ENCODE measurements at regions of chr20 and their contacts with region 1.

Region 1: GRCh38 chr20:50460460-50461267 is 49.5 kb upstream of the PTPN1 start:
- DNase-seq: peak; percentile 73
- H3K4me3 ChIP-seq: no peak overlapping the region
- H3K27ac ChIP-seq: no peak overlapping the region
- H3K4me1 ChIP-seq: peaks cover 18% of the 10 kb centered on the region
- H3K27me3 ChIP-seq: no peaks in the 10 kb centered on the region
- CTCF ChIP-seq: peak; percentile 95

Region 2: DNA sequence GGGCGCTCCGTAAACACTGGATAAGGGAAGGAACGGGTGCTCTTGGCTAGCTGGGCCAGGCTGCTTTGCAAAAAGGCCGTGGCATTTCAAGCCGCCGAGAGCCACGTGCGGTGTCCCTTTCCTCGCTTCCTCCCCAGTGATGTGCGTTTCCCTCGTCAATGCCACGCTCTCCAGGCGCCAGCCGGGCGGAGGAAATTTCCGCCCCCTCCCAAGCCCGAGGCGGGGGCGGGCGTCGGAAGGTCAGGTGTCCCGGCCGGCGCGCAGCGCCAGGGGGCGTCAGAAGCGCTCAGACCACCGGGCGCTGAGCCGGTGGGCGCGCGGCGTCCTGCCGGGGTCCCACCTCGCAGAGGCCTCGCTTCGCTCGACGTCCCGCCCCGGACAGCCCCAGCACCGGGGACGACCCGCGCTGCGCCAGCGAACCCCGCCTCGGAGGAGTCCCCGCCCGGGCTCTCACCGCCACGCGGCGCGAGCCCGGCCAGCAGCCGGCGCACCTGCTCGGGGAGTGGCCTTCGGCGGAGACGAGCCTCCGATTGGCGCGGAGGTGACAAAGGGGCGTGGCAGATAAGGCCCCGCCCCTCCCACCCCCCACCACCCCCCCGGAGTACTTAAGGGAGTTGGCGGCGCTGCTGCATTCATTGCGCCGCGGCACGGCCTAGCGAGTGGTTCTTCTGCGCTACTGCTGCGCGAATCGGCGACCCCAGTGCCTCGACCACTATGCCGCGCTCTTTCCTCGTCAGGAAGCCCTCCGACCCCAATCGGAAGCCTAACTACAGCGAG is 478.1 kb before region 1 on chr20 and contains the start of gene SNAI1:
- CTCF ChIA-PET with region 1: no interaction called
- dilution Hi-C with region 1: no loop called
- in situ Hi-C with region 1: no loop called
- intact Hi-C with region 1: loop called (anchors 10 kb)
- DNase-seq: peak; percentile 68
- H3K4me3 ChIP-seq: peak within 1 kb of the TSS in 1 of 3 experiments; percentile 32
- H3K27ac ChIP-seq: no peak within 1 kb of the TSS
- H3K4me1 ChIP-seq: peaks cover 15% of the 10 kb centered on the region
- H3K27me3 ChIP-seq: peaks cover 2% of the 10 kb centered on the region
- CTCF ChIP-seq: peak in 1 of 2 donors; percentile 26
- total RNA-seq, gene SNAI1: not detected

Region 3: GRCh38 chr20:50189681-50190582 is 270.7 kb before region 1 on chr20:
- CTCF ChIA-PET with region 1: no interaction called
- dilution Hi-C with region 1: no loop called
- in situ Hi-C with region 1: loop called in 1 of 2 experiments (anchors 5 kb)
- intact Hi-C with region 1: loop called (anchors 1 kb)
- DNase-seq: peak; percentile 69
- H3K4me3 ChIP-seq: peak overlapping the region in 2 of 3 experiments; percentile 89 to 99
- H3K27ac ChIP-seq: peak overlapping the region; percentile 68
- H3K4me1 ChIP-seq: peaks cover 18% of the 10 kb centered on the region
- H3K27me3 ChIP-seq: no peaks in the 10 kb centered on the region
- CTCF ChIP-seq: peak; percentile 25 to 70

Region 4: DNA sequence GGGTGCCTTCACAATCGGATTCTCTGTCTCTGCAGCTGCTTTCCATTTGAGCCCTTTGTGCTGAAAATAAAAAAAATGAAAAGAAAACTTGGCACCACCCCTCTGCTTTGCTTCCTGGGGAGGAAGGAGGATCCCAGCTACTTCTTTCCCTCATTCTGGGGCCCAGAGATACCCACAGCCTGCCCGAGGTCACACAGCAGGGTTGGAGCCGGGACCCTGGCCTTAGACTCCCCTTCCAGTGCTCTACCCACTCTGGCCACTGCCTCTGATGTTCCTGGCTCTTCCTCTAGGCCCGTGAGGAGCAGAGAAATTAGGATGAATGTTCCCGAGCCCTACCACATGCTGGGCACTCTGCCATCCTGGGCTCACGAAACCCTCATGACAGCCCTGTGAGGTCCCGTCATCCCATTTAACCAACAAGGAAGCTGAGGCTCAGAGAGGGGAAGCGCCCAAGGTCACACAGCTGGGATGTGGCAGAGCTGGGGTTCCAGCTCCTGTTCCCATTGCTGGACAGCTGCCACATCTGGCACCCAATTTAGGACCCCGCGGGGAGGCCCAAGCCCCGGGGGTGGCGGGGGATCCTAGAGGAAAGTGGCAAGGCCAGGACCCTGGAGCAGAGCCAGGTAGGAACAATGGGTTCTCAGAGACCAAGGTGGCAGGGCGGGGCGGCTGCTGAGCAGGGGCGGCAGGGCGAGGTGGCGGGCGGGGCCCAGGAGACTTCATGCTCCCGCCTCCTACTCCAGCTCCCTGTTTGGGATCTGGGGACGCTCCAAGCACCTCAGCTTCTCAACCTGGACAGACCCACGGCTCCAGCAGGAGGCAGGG is 193.4 kb before region 1 on chr20:
- CTCF ChIA-PET with region 1: no interaction called
- dilution Hi-C with region 1: no loop called
- in situ Hi-C with region 1: no loop called
- intact Hi-C with region 1: loop called (anchors 5 kb)
- DNase-seq: peak; percentile 81
- H3K4me3 ChIP-seq: no peak overlapping the region
- H3K27ac ChIP-seq: peak overlapping the region; percentile 67
- H3K4me1 ChIP-seq: peaks cover 21% of the 10 kb centered on the region
- H3K27me3 ChIP-seq: no peaks in the 10 kb centered on the region
- CTCF ChIP-seq: peak in 1 of 2 donors; percentile 28

Region 5: DNA sequence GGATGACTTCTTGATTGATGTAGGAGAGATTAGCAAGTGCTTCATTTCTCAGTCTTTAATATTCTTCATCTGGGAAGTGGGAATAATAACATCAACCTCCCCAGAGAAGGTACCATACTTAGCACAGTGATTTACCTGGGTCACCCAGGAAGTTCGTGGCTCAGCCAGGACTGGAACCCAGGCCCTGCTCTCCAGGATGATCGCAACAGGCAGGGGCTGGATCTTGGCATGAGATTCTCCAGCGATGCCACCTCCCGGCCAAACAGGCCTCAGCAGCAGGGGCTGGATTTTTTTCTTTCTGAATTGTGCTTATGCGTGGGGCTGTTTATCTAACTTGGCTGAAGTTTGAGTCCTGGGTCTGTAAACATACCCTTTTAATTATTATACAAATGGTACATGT is 80.0 kb before region 1 on chr20:
- CTCF ChIA-PET with region 1: no interaction called
- dilution Hi-C with region 1: no loop called
- in situ Hi-C with region 1: no loop called
- intact Hi-C with region 1: loop called (anchors 5 kb)
- DNase-seq: peak; percentile 28
- H3K4me3 ChIP-seq: no peak overlapping the region
- H3K27ac ChIP-seq: no peak overlapping the region
- H3K4me1 ChIP-seq: peaks cover 18% of the 10 kb centered on the region
- H3K27me3 ChIP-seq: no peaks in the 10 kb centered on the region
- CTCF ChIP-seq: peak; percentile 50 to 75

Region 6: GRCh38 chr20:50427740-50428462 is 32.8 kb before region 1 on chr20:
- CTCF ChIA-PET with region 1: no interaction called
- dilution Hi-C with region 1: no loop called
- in situ Hi-C with region 1: no loop called
- intact Hi-C with region 1: loop called (anchors 2 kb)
- DNase-seq: peak; percentile 72
- H3K4me3 ChIP-seq: no peak overlapping the region
- H3K27ac ChIP-seq: peak overlapping the region; percentile 39
- H3K4me1 ChIP-seq: peaks cover 60% of the 10 kb centered on the region
- H3K27me3 ChIP-seq: no peaks in the 10 kb centered on the region
- CTCF ChIP-seq: no peak

Region 7: GRCh38 chr20:50509935-50510705 is 49.5 kb after region 1 on chr20 and contains the start of gene PTPN1:
- CTCF ChIA-PET with region 1: no interaction called
- dilution Hi-C with region 1: no loop called
- in situ Hi-C with region 1: no loop called
- intact Hi-C with region 1: loop called (anchors 2 kb)
- DNase-seq: peak; percentile 99
- H3K4me3 ChIP-seq: peak within 1 kb of the TSS; percentile 86 to 91 (median 90)
- H3K27ac ChIP-seq: peak within 1 kb of the TSS; percentile 94
- H3K4me1 ChIP-seq: peaks cover 26% of the 10 kb centered on the region
- H3K27me3 ChIP-seq: no peaks in the 10 kb centered on the region
- CTCF ChIP-seq: peak; percentile 15 to 36
- total RNA-seq, gene PTPN1: 43.5 to 90.8 TPM